CD8-positive, alpha-beta memory T cell (primary cell): ENCODE measurements at regions of chr6 and their contacts with region 1.

Region 1: DNA sequence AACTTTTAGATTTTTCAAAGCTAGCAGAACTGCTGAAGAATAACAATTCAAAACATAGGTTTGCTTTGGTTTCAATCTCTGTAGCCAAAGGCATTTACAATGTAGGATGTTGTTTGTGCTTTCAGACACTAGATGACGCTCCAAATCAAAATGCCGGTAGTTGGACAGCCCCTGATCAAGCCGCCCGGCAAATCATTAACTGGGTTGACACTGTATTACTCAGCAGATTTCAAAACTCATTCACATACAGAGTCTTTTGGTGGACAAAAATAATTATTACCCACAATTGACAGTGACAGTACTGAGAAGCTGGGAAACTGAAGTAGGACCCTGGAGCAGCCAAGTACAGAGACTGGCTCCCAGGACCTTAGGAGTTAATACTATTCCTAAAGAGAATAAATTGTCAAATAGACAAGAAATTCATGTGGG is 21.3 kb upstream of the HFE start:
- DNase-seq: peak in 4 of 5 donors; percentile 32 to 67 (median 62)
- H3K4me3 ChIP-seq: no peak overlapping the region
- H3K4me3 Mint-ChIP-seq: no peak overlapping the region
- H3K27ac ChIP-seq: no peak overlapping the region
- H3K27ac Mint-ChIP-seq: no peak overlapping the region
- H3K4me1 ChIP-seq: no peaks in the 10 kb centered on the region
- H3K4me1 Mint-ChIP-seq: peaks cover 4 to 11% (median 6%) of the 10 kb centered on the region in 3 donors
- H3K27me3 ChIP-seq: no peaks in the 10 kb centered on the region
- H3K27me3 Mint-ChIP-seq: no peaks in the 10 kb centered on the region

Region 2: DNA sequence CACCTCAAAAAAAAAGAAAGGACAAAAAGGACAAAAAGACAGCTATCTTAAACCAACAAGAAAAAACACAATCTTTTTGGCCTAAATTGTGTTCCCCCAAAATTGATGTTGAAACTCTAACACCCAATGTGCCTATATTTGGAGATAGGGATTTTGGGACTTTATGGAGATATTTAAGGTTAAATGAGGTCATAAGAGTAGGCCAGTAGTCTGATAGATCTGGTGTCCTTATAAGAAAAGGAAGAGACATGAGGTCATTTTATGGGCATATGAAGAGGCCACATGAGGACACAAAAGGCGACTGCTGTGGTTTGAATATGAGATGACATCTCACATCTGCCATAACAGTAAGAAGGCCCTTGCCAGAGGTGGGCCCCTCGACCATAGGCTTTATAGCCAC is 53.9 kb before region 1 on chr6:
- CTCF ChIA-PET with region 1: no interaction called
- POLR2A ChIA-PET with region 1: no interaction called
- DNase-seq: no peak
- H3K4me3 ChIP-seq: no peak overlapping the region
- H3K4me3 Mint-ChIP-seq: no peak overlapping the region
- H3K27ac ChIP-seq: no peak overlapping the region
- H3K27ac Mint-ChIP-seq: no peak overlapping the region
- H3K4me1 ChIP-seq: peaks cover 3% of the 10 kb centered on the region
- H3K4me1 Mint-ChIP-seq: peaks cover 0 to 5% (median under 1%) of the 10 kb centered on the region in 3 donors
- H3K27me3 ChIP-seq: no peaks in the 10 kb centered on the region
- H3K27me3 Mint-ChIP-seq: no peaks in the 10 kb centered on the region

Region 3: GRCh38 chr6:26097268-26097875 is 31.4 kb after region 1 on chr6:
- CTCF ChIA-PET with region 1: interaction called, 375 read pairs
- POLR2A ChIA-PET with region 1: interaction called, 4 read pairs
- DNase-seq: peak; percentile 42 to 74 (median 59)
- H3K4me3 ChIP-seq: no peak overlapping the region
- H3K4me3 Mint-ChIP-seq: peak overlapping the region in 1 of 7 donors; percentile 14
- H3K27ac ChIP-seq: no peak overlapping the region
- H3K27ac Mint-ChIP-seq: peak overlapping the region in 1 of 8 donors; percentile 50
- H3K4me1 ChIP-seq: no peaks in the 10 kb centered on the region
- H3K4me1 Mint-ChIP-seq: peaks cover 1 to 5% (median 4%) of the 10 kb centered on the region in 3 donors
- H3K27me3 ChIP-seq: no peaks in the 10 kb centered on the region
- H3K27me3 Mint-ChIP-seq: peaks cover 0 to 2% of the 10 kb centered on the region in 2 donors